Activated naive CD4-positive, alpha-beta T cell treated with anti-CD3 and anti-CD28 coated beads for 36 hours (primary cell): ENCODE measurements at regions of chr10 and their contacts with region 1.

Region 1: DNA sequence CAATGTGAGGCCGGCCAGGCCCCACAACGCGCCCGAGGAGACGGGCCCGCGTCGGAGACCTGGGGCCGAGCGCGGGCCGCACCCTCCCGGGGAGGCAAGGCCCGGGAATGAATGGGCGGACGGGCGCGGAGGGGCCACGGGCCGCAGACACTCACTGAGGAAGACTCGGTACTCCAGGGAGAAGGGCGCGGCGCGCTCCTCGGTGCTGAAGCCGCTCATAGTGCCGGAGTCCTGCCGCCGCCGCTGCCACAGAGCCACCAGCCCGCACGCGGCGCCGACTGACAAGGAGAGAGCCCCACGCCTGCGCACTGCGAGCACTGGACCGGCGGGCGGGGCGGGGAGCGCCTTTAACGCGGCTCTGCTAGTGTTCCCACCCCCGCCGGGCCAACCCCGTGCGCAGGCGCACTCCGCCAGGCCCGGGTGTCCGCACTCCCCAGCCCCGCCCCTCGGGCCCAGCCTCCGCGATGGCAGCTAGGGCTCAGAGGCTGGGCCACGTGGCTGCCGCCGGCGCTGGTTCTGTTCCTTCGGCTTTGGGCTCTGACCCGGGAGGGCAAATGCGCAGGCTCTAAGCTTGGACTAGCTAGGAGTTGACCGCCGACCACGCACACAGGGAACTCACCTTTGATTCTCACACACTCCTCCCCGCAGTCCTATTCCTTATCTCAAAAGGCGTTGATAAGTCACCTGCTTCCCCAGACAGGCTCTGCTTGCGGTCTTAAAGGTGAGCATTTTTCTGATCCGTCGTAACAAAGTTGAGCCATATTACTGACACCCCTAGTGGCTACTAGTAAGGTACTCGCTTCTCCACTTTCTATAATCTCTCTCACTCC is at the start of gene PPA1:
- DNase-seq: peak; percentile 99
- H3K4me3 Mint-ChIP-seq: peak within 1 kb of the TSS; percentile 87
- H3K27ac Mint-ChIP-seq: peak within 1 kb of the TSS; percentile 93
- H3K4me1 Mint-ChIP-seq: peaks cover 36% of the 10 kb centered on the region
- H3K27me3 Mint-ChIP-seq: no peaks in the 10 kb centered on the region
- total RNA-seq, gene PPA1: 392 to 408 TPM

Region 2: DNA sequence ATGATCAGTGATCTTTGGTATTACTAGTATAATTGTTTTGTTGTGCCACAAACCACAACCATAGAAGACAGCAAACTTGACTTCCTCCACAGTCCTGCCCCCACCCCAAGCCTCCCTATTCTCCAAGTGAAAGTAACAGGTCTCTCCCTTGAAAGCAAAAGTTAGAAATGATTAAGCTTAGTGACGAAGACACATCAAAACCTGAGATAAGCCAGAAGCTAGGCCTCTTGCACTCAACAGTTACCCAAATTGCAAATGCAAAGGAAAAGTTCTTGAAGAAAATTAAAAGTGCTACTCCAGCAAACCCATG is 70.5 kb before region 1 on chr10:
- CTCF ChIA-PET with region 1: interaction called, 3 read pairs
- intact Hi-C with region 1: loop called (anchors 2 kb)
- DNase-seq: peak; percentile 87
- H3K4me3 Mint-ChIP-seq: peak overlapping the region; percentile 20
- H3K27ac Mint-ChIP-seq: peak overlapping the region; percentile 95
- H3K4me1 Mint-ChIP-seq: peaks cover 65% of the 10 kb centered on the region
- H3K27me3 Mint-ChIP-seq: no peaks in the 10 kb centered on the region

Region 3: DNA sequence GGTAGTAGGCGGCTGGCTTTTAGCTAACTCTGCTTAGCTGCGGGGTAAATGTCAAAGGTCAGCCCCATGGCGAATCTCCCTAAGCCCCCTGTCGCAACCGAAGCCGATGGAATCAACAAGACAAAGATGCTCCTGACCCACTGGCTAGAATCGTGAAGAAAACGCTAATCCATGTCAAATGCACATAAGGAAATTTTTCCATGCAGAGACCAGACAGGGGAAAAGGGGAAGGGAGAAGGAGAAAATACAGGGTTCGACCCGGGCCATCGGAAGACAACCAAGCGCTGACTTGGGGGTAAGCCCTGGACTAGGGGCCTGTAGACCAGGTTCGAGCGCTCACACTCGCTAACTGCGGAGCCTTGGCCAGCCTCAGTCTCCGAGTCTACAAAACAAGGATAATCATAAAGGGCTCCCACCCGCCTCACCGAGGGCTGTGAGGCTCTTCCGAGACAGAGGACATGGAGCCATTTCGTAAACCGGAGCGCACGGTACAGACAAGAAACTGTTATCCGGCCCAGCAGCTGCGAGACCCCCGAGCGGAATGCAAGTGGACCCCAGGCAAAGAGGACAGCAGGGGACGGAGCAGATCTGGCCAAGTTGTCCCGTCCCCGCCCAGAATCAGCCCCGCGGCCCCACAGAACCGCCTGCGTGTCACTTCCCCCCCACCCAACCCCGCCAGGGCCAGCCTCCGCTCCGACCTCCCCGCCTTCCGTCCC is 63.5 kb before region 1 on chr10:
- CTCF ChIA-PET with region 1: interaction called, 3 read pairs
- intact Hi-C with region 1: loop called (anchors 1 kb)
- DNase-seq: no peak
- H3K4me3 Mint-ChIP-seq: peak overlapping the region; percentile 87
- H3K27ac Mint-ChIP-seq: peak overlapping the region; percentile 90
- H3K4me1 Mint-ChIP-seq: peaks cover 66% of the 10 kb centered on the region
- H3K27me3 Mint-ChIP-seq: no peaks in the 10 kb centered on the region

Region 4: GRCh38 chr10:70221030-70221429 is 12.3 kb before region 1 on chr10:
- CTCF ChIA-PET with region 1: interaction called, 33 read pairs
- intact Hi-C with region 1: no loop called
- DNase-seq: no peak
- H3K4me3 Mint-ChIP-seq: no peak overlapping the region
- H3K27ac Mint-ChIP-seq: peak overlapping the region; percentile 82
- H3K4me1 Mint-ChIP-seq: peaks cover 34% of the 10 kb centered on the region
- H3K27me3 Mint-ChIP-seq: no peaks in the 10 kb centered on the region

Region 5: GRCh38 chr10:70272925-70273316 is 39.6 kb after region 1 on chr10:
- CTCF ChIA-PET with region 1: interaction called, 3 read pairs
- intact Hi-C with region 1: loop called (anchors 1 kb)
- DNase-seq: peak; percentile 35
- H3K4me3 Mint-ChIP-seq: no peak overlapping the region
- H3K27ac Mint-ChIP-seq: peak overlapping the region; percentile 56
- H3K4me1 Mint-ChIP-seq: peaks cover 22% of the 10 kb centered on the region
- H3K27me3 Mint-ChIP-seq: no peaks in the 10 kb centered on the region

Region 6: GRCh38 chr10:70381471-70382421 is 148.4 kb after region 1 on chr10:
- CTCF ChIA-PET with region 1: interaction called, 4 read pairs
- intact Hi-C with region 1: loop called (anchors 1 kb)
- DNase-seq: peak; percentile 42
- H3K4me3 Mint-ChIP-seq: peak overlapping the region; percentile 84
- H3K27ac Mint-ChIP-seq: no peak overlapping the region
- H3K4me1 Mint-ChIP-seq: peaks cover 10% of the 10 kb centered on the region
- H3K27me3 Mint-ChIP-seq: peaks cover 2% of the 10 kb centered on the region

Region 7: GRCh38 chr10:70478191-70479164 is 245.2 kb after region 1 on chr10 and contains the start of gene PALD1:
- CTCF ChIA-PET with region 1: no interaction called
- intact Hi-C with region 1: loop called (anchors 5 kb)
- DNase-seq: peak; percentile 42
- H3K4me3 Mint-ChIP-seq: peak within 1 kb of the TSS; percentile 74
- H3K27ac Mint-ChIP-seq: peak within 1 kb of the TSS; percentile 41
- H3K4me1 Mint-ChIP-seq: peaks cover 43% of the 10 kb centered on the region
- H3K27me3 Mint-ChIP-seq: peaks cover 29% of the 10 kb centered on the region
- total RNA-seq, gene PALD1: 0.69 TPM